ENCODE measurements at regions of chr4 and their contacts with region 1.

Region 1: DNA sequence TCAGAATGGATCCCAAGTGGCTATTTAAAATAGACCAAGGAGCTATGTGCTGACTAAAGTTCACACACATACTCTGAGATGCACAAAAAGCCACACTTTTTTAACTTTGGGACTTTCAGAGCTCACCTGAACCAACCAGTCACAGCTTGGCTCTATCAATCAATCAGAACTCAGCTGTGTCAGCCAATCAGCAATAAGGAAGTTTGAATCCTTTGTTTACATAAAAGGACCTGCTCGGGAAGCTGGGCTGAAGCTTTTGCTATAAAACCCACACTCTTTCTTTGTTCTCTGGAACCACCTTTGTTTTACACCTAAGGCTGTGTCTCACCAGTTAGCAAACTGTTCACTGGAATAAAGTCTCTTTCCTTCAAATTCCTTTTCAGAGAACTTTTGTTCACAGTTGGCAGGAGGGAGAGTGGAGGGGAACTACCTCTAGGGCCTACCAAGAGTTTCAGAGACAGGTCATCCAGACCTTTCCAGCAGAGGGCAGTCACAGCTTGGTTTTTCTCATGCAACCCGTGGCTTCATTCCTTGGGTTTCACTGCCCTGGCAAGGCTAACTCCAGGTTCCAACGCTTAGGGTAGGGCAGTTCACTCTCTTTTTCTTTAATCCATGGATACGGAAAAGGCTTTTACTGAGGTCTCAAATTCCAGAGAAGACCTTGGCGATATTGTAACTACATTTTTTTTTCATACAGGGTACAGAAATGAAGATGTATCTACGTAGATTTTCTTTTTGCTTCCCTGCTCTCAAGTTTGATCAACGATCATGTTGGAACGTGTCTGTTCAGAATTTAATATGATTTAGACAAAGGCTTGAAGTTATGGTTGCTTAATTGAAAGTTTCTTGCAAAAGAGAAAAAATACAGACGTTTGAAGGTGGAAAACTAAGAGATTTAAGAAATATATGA is 80.7 kb downstream of the GPRIN3 start:
- DNase-seq: peak; percentile 87
- ATAC-seq: peak; percentile 80
- H3K4me3 Mint-ChIP-seq: peak overlapping the region; percentile 44
- H3K27ac Mint-ChIP-seq: peak overlapping the region; percentile 39
- H3K4me1 Mint-ChIP-seq: peaks cover 16% of the 10 kb centered on the region
- H3K27me3 Mint-ChIP-seq: peaks cover 3% of the 10 kb centered on the region
- CTCF ChIP-seq: peak; percentile 63

Region 2: DNA sequence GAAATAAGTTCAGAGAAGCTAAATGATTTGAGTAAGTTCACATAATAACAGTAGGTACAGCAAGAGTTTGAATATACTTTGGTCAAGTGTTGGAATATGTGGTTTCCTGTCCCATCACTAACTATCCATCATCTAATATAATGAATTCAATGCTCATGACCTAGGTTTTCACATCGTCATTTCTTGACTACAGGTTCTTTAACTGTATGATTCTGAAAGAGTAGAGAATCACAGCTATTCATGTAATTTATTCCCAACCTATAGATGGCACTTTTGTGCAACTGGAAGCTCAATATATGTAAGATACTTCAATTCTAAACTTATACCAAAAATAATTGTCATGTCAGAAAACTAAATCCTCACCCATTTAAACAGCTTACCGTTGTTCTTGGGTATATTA is 62.5 kb before region 1 on chr4:
- CTCF ChIA-PET with region 1: interaction called, 16 read pairs
- POLR2A ChIA-PET with region 1: no interaction called
- intact Hi-C with region 1: no loop called
- DNase-seq: no peak
- ATAC-seq: no peak
- H3K4me3 Mint-ChIP-seq: no peak overlapping the region
- H3K27ac Mint-ChIP-seq: no peak overlapping the region
- H3K4me1 Mint-ChIP-seq: no peaks in the 10 kb centered on the region
- H3K27me3 Mint-ChIP-seq: no peaks in the 10 kb centered on the region
- CTCF ChIP-seq: no peak

Region 3: DNA sequence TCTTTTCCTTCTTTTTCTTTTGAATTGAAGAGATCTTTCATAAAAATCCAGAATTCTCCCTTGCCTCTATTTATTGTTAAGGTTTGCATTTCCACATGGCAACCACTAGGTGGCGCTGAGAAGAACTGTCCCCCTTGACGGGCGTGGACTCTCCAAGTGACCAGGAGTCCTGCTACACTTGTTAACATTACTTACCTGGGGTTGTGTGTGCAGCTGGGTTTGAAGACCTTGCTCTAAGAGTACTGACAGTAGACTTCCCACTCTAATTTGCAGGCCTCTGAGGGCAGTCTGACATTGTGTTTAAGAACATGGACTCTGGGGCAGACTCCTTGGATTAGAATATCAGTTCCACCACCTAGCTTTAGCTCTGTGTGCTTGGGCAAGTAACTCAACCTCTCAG is 27.9 kb after region 1 on chr4:
- CTCF ChIA-PET with region 1: interaction called, 19 read pairs
- POLR2A ChIA-PET with region 1: no interaction called
- intact Hi-C with region 1: no loop called
- DNase-seq: peak; percentile 48
- ATAC-seq: peak; percentile 76
- H3K4me3 Mint-ChIP-seq: no peak overlapping the region
- H3K27ac Mint-ChIP-seq: peak overlapping the region; percentile 75
- H3K4me1 Mint-ChIP-seq: peaks cover 61% of the 10 kb centered on the region
- H3K27me3 Mint-ChIP-seq: no peaks in the 10 kb centered on the region
- CTCF ChIP-seq: peak; percentile 86

Region 4: GRCh38 chr4:89300499-89300898 is 73.6 kb after region 1 on chr4:
- CTCF ChIA-PET with region 1: interaction called, 13 read pairs
- POLR2A ChIA-PET with region 1: interaction called, 3 read pairs
- intact Hi-C with region 1: loop called (anchors 5 kb)
- DNase-seq: no peak
- ATAC-seq: no peak
- H3K4me3 Mint-ChIP-seq: peak overlapping the region; percentile 52
- H3K27ac Mint-ChIP-seq: peak overlapping the region; percentile 100
- H3K4me1 Mint-ChIP-seq: peaks cover 78% of the 10 kb centered on the region
- H3K27me3 Mint-ChIP-seq: no peaks in the 10 kb centered on the region
- CTCF ChIP-seq: no peak

Region 5: GRCh38 chr4:89427767-89428166 is 200.8 kb after region 1 on chr4:
- CTCF ChIA-PET with region 1: interaction called, 12 read pairs
- POLR2A ChIA-PET with region 1: no interaction called
- intact Hi-C with region 1: no loop called
- DNase-seq: no peak
- ATAC-seq: no peak
- H3K4me3 Mint-ChIP-seq: no peak overlapping the region
- H3K27ac Mint-ChIP-seq: no peak overlapping the region
- H3K4me1 Mint-ChIP-seq: no peaks in the 10 kb centered on the region
- H3K27me3 Mint-ChIP-seq: no peaks in the 10 kb centered on the region
- CTCF ChIP-seq: no peak

Region 6: DNA sequence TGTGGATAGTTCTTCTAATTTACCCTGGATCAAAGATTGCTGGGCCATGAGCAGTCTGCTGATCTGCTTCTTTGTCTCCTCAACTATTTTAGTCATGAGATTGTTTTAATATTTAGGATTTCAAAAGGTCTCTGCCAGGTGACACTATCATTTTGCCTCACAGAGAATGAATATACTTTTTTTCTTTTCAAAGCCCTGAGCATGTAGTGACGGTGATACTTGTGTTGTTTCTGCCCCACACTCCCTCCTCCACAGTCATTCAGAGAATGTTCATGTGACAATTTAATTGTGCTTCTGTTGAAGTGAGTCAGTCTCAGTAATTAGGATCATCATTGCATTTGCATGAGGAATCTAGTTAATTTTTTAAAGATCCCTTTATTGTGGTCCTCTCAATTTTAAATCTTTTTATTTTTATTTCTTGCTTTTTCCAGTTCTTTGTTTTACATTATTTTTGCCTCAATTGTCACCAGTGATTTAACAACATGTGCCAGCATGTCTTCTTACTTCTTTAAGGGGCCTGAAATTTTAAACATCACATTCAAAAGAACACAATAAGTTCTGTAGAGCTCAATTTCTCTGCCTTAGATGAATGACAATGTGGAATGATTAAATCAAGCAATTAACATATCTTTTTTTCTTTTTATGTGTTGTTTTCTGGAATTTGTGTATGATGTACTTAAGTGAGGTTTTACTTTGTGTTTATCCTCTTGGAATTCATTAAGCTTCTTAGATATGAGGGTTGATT is 680.0 kb after region 1 on chr4:
- CTCF ChIA-PET with region 1: no interaction called
- POLR2A ChIA-PET with region 1: no interaction called
- intact Hi-C with region 1: loop called (anchors 5 kb)
- DNase-seq: no peak
- ATAC-seq: peak; percentile 42
- H3K4me3 Mint-ChIP-seq: no peak overlapping the region
- H3K27ac Mint-ChIP-seq: no peak overlapping the region
- H3K4me1 Mint-ChIP-seq: no peaks in the 10 kb centered on the region
- H3K27me3 Mint-ChIP-seq: no peaks in the 10 kb centered on the region
- CTCF ChIP-seq: no peak

Measured in activated CD8-positive, alpha-beta T cell treated with anti-CD3 and anti-CD28 coated beads for 36 hours (primary cell).